Activated CD8-positive, alpha-beta memory T cell treated with anti-CD3 and anti-CD28 coated beads, Interleukin-2, amount 10 ng/mL, durations not matched to agents 7 days and 5 days (primary cell): ENCODE measurements at regions of chr1 and their contacts with region 1.

Region 1: GRCh38 chr1:9615316-9616063 is 26.8 kb downstream of the TMEM201 start:
- DNase-seq: peak; percentile 71
- ATAC-seq: peak; percentile 81
- H3K4me3 Mint-ChIP-seq: no peak overlapping the region
- H3K27ac Mint-ChIP-seq: no peak overlapping the region
- H3K4me1 Mint-ChIP-seq: no peaks in the 10 kb centered on the region
- H3K27me3 Mint-ChIP-seq: peaks cover 7% of the 10 kb centered on the region

Region 2: DNA sequence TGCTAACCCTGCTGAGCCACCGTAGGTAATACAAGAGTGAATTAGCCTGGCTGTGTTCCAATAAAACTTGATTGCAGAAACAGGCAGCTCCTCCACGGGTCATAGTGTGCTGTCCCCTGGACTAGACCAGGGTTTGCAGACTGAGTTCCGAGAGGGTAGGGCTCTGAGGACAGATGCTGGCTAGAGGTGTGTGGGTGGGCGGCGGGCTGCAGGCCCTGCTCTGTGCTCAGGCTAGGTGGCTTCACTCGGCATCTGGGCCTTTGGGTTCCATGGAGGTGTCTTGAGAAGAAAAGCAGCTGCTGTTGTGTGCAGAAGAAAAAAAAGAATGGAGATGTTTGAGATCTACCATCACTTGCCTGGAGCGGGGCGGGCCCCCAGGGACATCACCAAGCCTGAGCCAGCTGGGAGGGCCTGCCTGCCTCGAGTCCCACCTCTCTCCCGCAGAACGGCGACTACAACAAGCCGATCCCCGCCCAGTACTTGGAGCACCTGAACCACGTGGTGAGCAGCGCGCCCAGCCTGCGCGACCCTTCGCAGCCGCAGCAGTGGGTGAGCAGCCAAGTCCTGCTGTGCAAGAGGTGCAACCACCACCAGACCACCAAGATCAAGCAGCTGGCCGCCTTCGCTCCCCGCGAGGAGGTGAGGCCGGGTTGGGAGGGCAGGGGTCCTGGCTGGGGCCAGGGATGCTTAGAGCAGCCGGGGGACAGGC is 18.9 kb before region 1 on chr1:
- CTCF ChIA-PET with region 1: interaction called, 10 read pairs
- DNase-seq: no peak
- ATAC-seq: no peak
- H3K4me3 Mint-ChIP-seq: no peak overlapping the region
- H3K27ac Mint-ChIP-seq: no peak overlapping the region
- H3K4me1 Mint-ChIP-seq: peaks cover 17% of the 10 kb centered on the region
- H3K27me3 Mint-ChIP-seq: no peaks in the 10 kb centered on the region

Region 3: GRCh38 chr1:9867408-9868243 is 252.1 kb after region 1 on chr1:
- CTCF ChIA-PET with region 1: interaction called, 15 read pairs
- DNase-seq: peak; percentile 92
- ATAC-seq: peak; percentile 98
- H3K4me3 Mint-ChIP-seq: no peak overlapping the region
- H3K27ac Mint-ChIP-seq: peak overlapping the region; percentile 7
- H3K4me1 Mint-ChIP-seq: peaks cover 2% of the 10 kb centered on the region
- H3K27me3 Mint-ChIP-seq: no peaks in the 10 kb centered on the region